B cell (primary cell): ENCODE measurements at regions of chr2 and their contacts with region 1.

Region 1: DNA sequence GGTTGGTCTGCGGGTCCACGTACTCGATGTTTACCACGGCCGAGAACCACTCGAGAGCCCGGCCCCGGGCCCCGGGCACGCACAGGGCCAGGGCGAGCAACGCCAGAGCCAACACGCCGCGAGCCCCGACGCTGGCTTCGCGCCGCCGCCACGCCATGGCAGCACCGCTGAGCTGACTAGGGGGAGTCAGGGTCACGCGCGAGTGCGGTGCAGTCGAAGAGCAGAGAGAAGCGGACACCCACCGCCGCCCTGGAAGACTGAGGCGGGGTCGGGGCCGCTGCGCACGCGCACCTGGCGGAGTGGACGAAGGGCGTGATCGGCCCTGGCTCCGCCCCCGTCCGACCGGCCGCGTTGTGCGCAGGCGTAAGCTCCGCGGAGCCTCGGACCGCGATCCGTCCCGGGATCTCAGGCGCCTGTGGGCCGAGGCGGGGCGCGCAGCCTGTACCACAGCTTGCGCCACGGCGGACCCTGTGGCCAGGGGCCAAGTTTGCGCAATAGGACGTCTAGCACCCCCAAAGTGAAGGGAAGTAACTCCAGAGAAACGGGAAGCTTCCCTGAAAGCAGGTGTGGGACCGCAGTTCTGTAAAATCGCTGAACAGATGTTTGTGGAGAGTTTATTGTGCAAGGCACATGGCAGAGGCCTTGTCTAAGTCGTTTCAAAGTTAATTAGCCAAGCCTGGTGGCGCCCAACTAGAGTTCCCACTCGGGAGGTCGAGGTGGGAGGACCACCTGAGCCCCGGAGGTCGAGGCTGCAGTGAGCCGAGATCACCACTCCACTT is at the start of gene RNF149:
- DNase-seq: peak; percentile 94
- ATAC-seq: peak; percentile 82
- H3K4me3 ChIP-seq: peak within 1 kb of the TSS; percentile 57 to 93 (median 76)
- H3K4me3 Mint-ChIP-seq: peak within 1 kb of the TSS; percentile 93
- H3K27ac ChIP-seq: peak within 1 kb of the TSS; percentile 84 to 85
- H3K27ac Mint-ChIP-seq: peak within 1 kb of the TSS; percentile 92
- H3K4me1 ChIP-seq: peaks cover 32 to 44% of the 10 kb centered on the region in 2 donors
- H3K4me1 Mint-ChIP-seq: peaks cover 54% of the 10 kb centered on the region
- H3K27me3 ChIP-seq: no peaks in the 10 kb centered on the region
- H3K27me3 Mint-ChIP-seq: no peaks in the 10 kb centered on the region
- CTCF ChIP-seq: no peak
- total RNA-seq, gene RNF149: 71.6 and 78.0 TPM in 2 replicates

Region 2: DNA sequence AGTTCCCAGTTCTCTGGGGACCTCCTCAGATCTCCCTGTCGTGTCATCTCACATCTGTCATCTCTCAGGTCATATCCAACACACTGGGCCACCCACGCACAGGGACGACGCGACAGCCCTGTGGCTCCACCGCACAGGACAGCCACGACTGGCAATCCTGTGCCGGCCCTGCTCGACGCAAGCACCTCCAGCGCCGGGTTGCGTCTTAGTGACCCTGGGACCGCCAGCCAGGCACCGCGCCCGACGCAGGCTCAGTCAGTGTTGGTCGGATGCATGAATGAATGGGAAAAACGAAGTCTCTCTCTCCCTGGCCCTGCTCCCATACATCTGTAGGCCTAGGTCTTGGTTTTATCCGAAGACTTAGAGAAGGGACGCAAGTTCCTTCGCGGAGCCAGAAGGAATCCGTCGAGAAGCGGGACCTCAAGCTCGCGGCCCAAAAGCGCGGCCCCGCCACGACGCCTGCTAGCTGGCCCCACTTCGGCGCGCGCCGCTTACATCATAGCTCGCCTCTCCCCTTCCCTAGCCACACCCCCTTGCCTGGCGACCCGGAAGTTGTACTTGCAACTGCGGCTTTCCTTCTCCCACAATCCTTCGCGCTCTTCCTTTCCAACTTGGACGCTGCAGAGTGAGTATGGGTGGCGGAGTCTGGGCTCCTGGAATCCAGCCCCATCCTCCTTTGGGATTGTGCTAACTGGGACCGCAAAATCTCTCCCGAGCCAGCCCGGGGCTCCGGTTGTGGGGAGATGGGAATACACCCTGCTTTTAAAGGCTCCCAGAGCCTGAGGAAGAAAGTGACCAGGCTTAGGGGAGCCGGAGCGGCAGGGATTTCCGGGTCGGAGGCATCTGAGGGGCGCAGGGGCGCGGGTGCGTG is 306.7 kb before region 1 on chr2 and contains the start of gene RPL31:
- CTCF ChIA-PET with region 1: no interaction called
- POLR2A ChIA-PET with region 1: interaction called, 3 read pairs
- intact Hi-C with region 1: loop called (anchors 1 kb)
- DNase-seq: peak; percentile 95
- ATAC-seq: peak; percentile 97
- H3K4me3 ChIP-seq: peak within 1 kb of the TSS; percentile 80 to 99 (median 92)
- H3K4me3 Mint-ChIP-seq: peak within 1 kb of the TSS; percentile 88
- H3K27ac ChIP-seq: peak within 1 kb of the TSS; percentile 84 to 91
- H3K27ac Mint-ChIP-seq: peak within 1 kb of the TSS; percentile 96
- H3K4me1 ChIP-seq: peaks cover 15 to 21% of the 10 kb centered on the region in 2 donors
- H3K4me1 Mint-ChIP-seq: peaks cover 40% of the 10 kb centered on the region
- H3K27me3 ChIP-seq: no peaks in the 10 kb centered on the region
- H3K27me3 Mint-ChIP-seq: no peaks in the 10 kb centered on the region
- CTCF ChIP-seq: no peak
- total RNA-seq, gene RPL31: 1,595 and 1,767 TPM in 2 replicates

Region 3: GRCh38 chr2:101252408-101253012 is 56.1 kb before region 1 on chr2 and contains the start of gene CNOT11:
- CTCF ChIA-PET with region 1: no interaction called
- POLR2A ChIA-PET with region 1: no interaction called
- intact Hi-C with region 1: loop called (anchors 1 kb)
- DNase-seq: peak; percentile 99
- ATAC-seq: peak; percentile 85
- H3K4me3 ChIP-seq: peak within 1 kb of the TSS; percentile 68 to 91 (median 88)
- H3K4me3 Mint-ChIP-seq: peak within 1 kb of the TSS; percentile 95
- H3K27ac ChIP-seq: peak within 1 kb of the TSS; percentile 83 to 98
- H3K27ac Mint-ChIP-seq: peak within 1 kb of the TSS; percentile 92
- H3K4me1 ChIP-seq: peaks cover 20 to 30% of the 10 kb centered on the region in 2 donors
- H3K4me1 Mint-ChIP-seq: peaks cover 44% of the 10 kb centered on the region
- H3K27me3 ChIP-seq: no peaks in the 10 kb centered on the region
- H3K27me3 Mint-ChIP-seq: no peaks in the 10 kb centered on the region
- CTCF ChIP-seq: no peak
- total RNA-seq, gene CNOT11: 46.3 and 46.7 TPM in 2 replicates

Region 4: GRCh38 chr2:101341901-101342624 is 33.4 kb after region 1 on chr2:
- CTCF ChIA-PET with region 1: interaction called, 11 read pairs
- POLR2A ChIA-PET with region 1: no interaction called
- intact Hi-C with region 1: no loop called
- DNase-seq: peak; percentile 73
- ATAC-seq: peak; percentile 56
- H3K4me3 ChIP-seq: no peak overlapping the region
- H3K4me3 Mint-ChIP-seq: no peak overlapping the region
- H3K27ac ChIP-seq: no peak overlapping the region
- H3K27ac Mint-ChIP-seq: no peak overlapping the region
- H3K4me1 ChIP-seq: peaks cover 0 to 8% of the 10 kb centered on the region in 2 donors
- H3K4me1 Mint-ChIP-seq: peaks cover 7% of the 10 kb centered on the region
- H3K27me3 ChIP-seq: no peaks in the 10 kb centered on the region
- H3K27me3 Mint-ChIP-seq: peaks cover 2% of the 10 kb centered on the region
- CTCF ChIP-seq: peak; percentile 90

Region 5: GRCh38 chr2:101387151-101387807 is 78.7 kb after region 1 on chr2 and contains the start of gene CREG2:
- CTCF ChIA-PET with region 1: no interaction called
- POLR2A ChIA-PET with region 1: no interaction called
- intact Hi-C with region 1: no loop called
- DNase-seq: peak; percentile 70
- ATAC-seq: peak; percentile 77
- H3K4me3 ChIP-seq: peak within 1 kb of the TSS in 4 of 5 experiments; percentile 30 to 56 (median 44)
- H3K4me3 Mint-ChIP-seq: peak within 1 kb of the TSS; percentile 84
- H3K27ac ChIP-seq: no peak within 1 kb of the TSS
- H3K27ac Mint-ChIP-seq: no peak within 1 kb of the TSS
- H3K4me1 ChIP-seq: peaks cover 13 to 16% of the 10 kb centered on the region in 2 donors
- H3K4me1 Mint-ChIP-seq: peaks cover 14% of the 10 kb centered on the region
- H3K27me3 ChIP-seq: peaks cover 0 to 40% (median 27%) of the 10 kb centered on the region in 4 experiments
- H3K27me3 Mint-ChIP-seq: peaks cover 55% of the 10 kb centered on the region
- CTCF ChIP-seq: peak; percentile 69
- total RNA-seq, gene CREG2: 0.34 TPM in 1 of 2 replicates, not detected in the other

Region 6: GRCh38 chr2:101717071-101717845 is 408.6 kb after region 1 on chr2:
- CTCF ChIA-PET with region 1: no interaction called
- POLR2A ChIA-PET with region 1: no interaction called
- intact Hi-C with region 1: loop called (anchors 5 kb)
- DNase-seq: peak; percentile 93
- ATAC-seq: peak; percentile 85
- H3K4me3 ChIP-seq: peak overlapping the region in 4 of 5 experiments; percentile 5 to 52 (median 19)
- H3K4me3 Mint-ChIP-seq: peak overlapping the region; percentile 83
- H3K27ac ChIP-seq: peak overlapping the region; percentile 94 to 99
- H3K27ac Mint-ChIP-seq: peak overlapping the region; percentile 96
- H3K4me1 ChIP-seq: peaks cover 92 to 93% of the 10 kb centered on the region in 2 donors
- H3K4me1 Mint-ChIP-seq: peaks cover 83% of the 10 kb centered on the region
- H3K27me3 ChIP-seq: no peaks in the 10 kb centered on the region
- H3K27me3 Mint-ChIP-seq: no peaks in the 10 kb centered on the region
- CTCF ChIP-seq: no peak